IMR-90 (cell line): ENCODE measurements at regions of chr12 and their contacts with region 1.

Region 1: GRCh38 chr12:58346032-58346632 is 404.8 kb downstream of the ATP23 start:
- DNase-seq: peak; percentile 62
- ATAC-seq: peak; percentile 77
- H3K4me3 ChIP-seq: no peak overlapping the region
- H3K27ac ChIP-seq: no peak overlapping the region
- H3K4me1 ChIP-seq: peaks cover 10% of the 10 kb centered on the region
- H3K27me3 ChIP-seq: no peaks in the 10 kb centered on the region
- CTCF ChIP-seq: peak; percentile 86
- POLR2A ChIP-seq: no peak
- RAD21 ChIP-seq: peak; percentile 92

Region 2: GRCh38 chr12:57993025-57993424 is 353.1 kb before region 1 on chr12:
- CTCF ChIA-PET with region 1: no interaction called
- POLR2A ChIA-PET with region 1: no interaction called
- dilution Hi-C with region 1: no loop called
- in situ Hi-C with region 1: loop called (anchors 10 kb)
- intact Hi-C with region 1: loop called (anchors 2 kb)
- DNase-seq: peak; percentile 28
- ATAC-seq: peak; percentile 88
- H3K4me3 ChIP-seq: no peak overlapping the region
- H3K27ac ChIP-seq: no peak overlapping the region
- H3K4me1 ChIP-seq: no peaks in the 10 kb centered on the region
- H3K27me3 ChIP-seq: no peaks in the 10 kb centered on the region; the same call in 1 of the 2 replicates
- CTCF ChIP-seq: peak; percentile 49
- POLR2A ChIP-seq: no peak
- RAD21 ChIP-seq: peak; percentile 45; the same call in 1 of the 2 replicates

Region 3: GRCh38 chr12:58765653-58766512 is 419.8 kb after region 1 on chr12:
- CTCF ChIA-PET with region 1: no interaction called
- POLR2A ChIA-PET with region 1: no interaction called
- dilution Hi-C with region 1: no loop called
- in situ Hi-C with region 1: no loop called
- intact Hi-C with region 1: loop called (anchors 10 kb)
- DNase-seq: peak; percentile 59
- ATAC-seq: peak; percentile 25
- H3K4me3 ChIP-seq: no peak overlapping the region
- H3K27ac ChIP-seq: peak overlapping the region; percentile 87; the same call in 1 of the 2 replicates
- H3K4me1 ChIP-seq: peaks cover 9% of the 10 kb centered on the region
- H3K27me3 ChIP-seq: no peaks in the 10 kb centered on the region
- CTCF ChIP-seq: no peak
- POLR2A ChIP-seq: no peak
- RAD21 ChIP-seq: no peak

Region 4: DNA sequence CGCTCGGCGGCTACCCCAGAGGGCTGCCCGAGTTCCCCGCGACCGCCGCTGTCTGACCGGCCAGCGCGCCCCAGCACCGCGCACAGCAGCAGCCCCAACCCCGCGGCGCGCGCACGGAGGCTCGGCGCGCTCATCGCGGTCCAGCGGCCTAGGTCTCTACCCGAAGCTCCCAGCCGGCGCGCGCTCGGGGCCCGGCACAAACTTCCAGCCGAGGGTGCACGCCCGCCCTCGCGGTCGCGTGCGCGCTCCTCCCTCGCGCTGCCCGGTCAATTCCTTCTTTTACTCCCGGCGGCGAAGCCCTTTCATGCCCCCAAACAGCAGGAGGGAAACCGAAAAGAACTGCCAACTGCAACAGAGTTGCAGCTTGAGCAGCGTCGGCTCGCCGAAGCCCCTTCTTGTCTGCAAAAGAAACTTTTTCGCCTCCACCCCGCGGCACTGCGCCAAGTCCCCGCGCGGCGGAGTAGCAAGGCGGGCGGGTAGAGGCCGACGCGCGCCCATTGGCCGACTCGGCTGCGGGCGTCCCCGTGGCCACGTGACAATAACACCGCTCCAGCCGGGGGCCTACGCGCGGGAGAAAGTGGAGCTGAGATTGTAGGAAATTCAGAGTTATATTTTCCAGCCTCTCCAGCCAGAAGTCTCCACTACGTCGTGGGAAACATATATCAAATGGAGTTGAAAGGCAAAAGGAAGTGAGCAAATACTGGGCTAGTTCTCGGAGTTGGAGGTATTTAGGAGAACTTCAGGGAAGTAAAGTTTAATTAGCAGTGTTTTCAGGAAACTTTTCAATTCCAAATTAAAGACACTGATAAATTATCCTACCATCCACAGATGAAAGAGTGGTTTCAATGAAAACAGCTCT is 574.2 kb after region 1 on chr12 and contains the start of gene LRIG3:
- CTCF ChIA-PET with region 1: no interaction called
- POLR2A ChIA-PET with region 1: no interaction called
- dilution Hi-C with region 1: no loop called
- in situ Hi-C with region 1: no loop called
- intact Hi-C with region 1: loop called (anchors 2 kb)
- DNase-seq: peak; percentile 89
- ATAC-seq: peak; percentile 82
- H3K4me3 ChIP-seq: peak within 1 kb of the TSS; percentile 80
- H3K27ac ChIP-seq: peak within 1 kb of the TSS; percentile 98
- H3K4me1 ChIP-seq: no peaks in the 10 kb centered on the region; the same call in none of the 2 replicates
- H3K27me3 ChIP-seq: no peaks in the 10 kb centered on the region
- CTCF ChIP-seq: 0 out of 2 replicates have a peak, but pooled peaks have one; percentile 1
- POLR2A ChIP-seq: no peak
- RAD21 ChIP-seq: no peak
- total RNA-seq, gene LRIG3: 63.9 and 71.2 TPM in 2 replicates

Region 5: DNA sequence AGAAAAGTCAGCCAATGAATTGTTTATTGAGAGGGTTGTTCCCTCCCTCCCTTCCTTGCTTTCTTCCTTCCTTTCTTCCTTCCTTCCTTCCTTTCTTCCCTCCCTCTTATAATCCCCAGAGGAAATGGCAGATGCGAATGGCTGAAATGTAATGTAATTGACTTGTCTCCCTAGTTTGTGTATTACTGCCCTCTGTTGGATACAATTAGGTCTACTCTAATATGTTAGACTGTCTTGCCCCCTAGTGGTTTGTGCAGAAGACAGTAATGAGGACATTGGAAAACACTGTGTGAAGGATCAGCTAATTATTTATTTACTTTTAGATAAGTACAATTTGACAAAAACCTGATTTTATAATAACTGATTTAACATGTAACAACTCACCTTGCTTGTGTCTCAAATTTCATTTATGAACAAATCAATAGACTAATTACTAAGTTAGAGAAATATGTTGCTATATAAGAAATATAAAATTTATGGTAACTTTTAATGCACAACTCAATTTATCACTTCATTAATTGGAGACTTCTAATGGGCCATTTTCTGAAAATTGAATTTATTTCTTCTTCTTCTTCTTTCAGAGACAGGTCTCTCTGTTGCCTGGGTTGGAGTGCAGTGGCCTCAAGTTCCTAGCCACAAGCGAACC is 804.0 kb after region 1 on chr12:
- CTCF ChIA-PET with region 1: interaction called, 4 read pairs
- POLR2A ChIA-PET with region 1: no interaction called
- dilution Hi-C with region 1: no loop called
- in situ Hi-C with region 1: loop called (anchors 10 kb)
- intact Hi-C with region 1: loop called (anchors 1 kb)
- DNase-seq: peak; percentile 84
- ATAC-seq: peak; percentile 96
- H3K4me3 ChIP-seq: no peak overlapping the region
- H3K27ac ChIP-seq: peak overlapping the region; percentile 2; the same call in 1 of the 2 replicates
- H3K4me1 ChIP-seq: peaks cover 4% of the 10 kb centered on the region; the same call in 1 of the 2 replicates
- H3K27me3 ChIP-seq: no peaks in the 10 kb centered on the region
- CTCF ChIP-seq: peak; percentile 100
- POLR2A ChIP-seq: no peak
- RAD21 ChIP-seq: peak; percentile 83

Region 6: DNA sequence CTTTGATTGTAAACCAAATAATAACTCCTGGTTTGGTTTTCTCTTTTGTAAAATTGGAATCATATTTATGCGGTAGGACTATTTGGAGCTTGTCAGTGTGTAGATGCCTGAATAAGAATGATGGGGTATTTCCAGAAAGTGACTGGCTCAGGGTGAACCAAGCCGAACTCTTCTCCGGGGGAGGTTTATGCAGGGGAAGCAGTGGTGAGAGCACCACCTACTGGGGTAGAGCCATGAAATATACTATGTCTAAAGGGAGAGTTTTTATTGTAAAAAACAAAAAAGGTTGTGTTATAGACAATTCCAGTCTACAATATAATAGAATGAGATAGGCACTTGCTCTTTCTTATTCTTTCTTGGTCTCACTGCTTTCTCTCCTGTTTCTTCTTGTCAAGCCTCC is 1026.8 kb after region 1 on chr12:
- CTCF ChIA-PET with region 1: no interaction called
- POLR2A ChIA-PET with region 1: no interaction called
- dilution Hi-C with region 1: no loop called
- in situ Hi-C with region 1: no loop called
- intact Hi-C with region 1: loop called (anchors 5 kb)
- DNase-seq: peak; percentile 21
- ATAC-seq: peak; percentile 95
- H3K4me3 ChIP-seq: no peak overlapping the region
- H3K27ac ChIP-seq: no peak overlapping the region
- H3K4me1 ChIP-seq: no peaks in the 10 kb centered on the region
- H3K27me3 ChIP-seq: no peaks in the 10 kb centered on the region
- CTCF ChIP-seq: peak; percentile 46
- POLR2A ChIP-seq: no peak
- RAD21 ChIP-seq: peak; percentile 44